ENCODE measurements at regions of chr11 and their contacts with region 1.

Region 1: GRCh38 chr11:34065505-34066203 is 14.1 kb downstream of the CAPRIN1 start:
- DNase-seq: no peak
- H3K4me3 ChIP-seq: no peak overlapping the region
- H3K27ac ChIP-seq: peak overlapping the region in 1 of 2 experiments; percentile 2; a peak in 1 of 4 replicates
- H3K4me1 ChIP-seq: peaks cover 0 to 72% of the 10 kb centered on the region in 2 experiments
- H3K27me3 ChIP-seq: no peaks in the 10 kb centered on the region
- CTCF ChIP-seq: no peak
- EP300 ChIP-seq: no peak
- RAD21 ChIP-seq: no peak

Region 2: GRCh38 chr11:33996498-33997454 is 68.9 kb before region 1 on chr11:
- CTCF ChIA-PET with region 1: interaction called, 10 read pairs
- POLR2A ChIA-PET with region 1: no interaction called
- DNase-seq: peak; percentile 80
- H3K4me3 ChIP-seq: no peak overlapping the region
- H3K27ac ChIP-seq: no peak overlapping the region
- H3K4me1 ChIP-seq: peaks cover 6 to 30% of the 10 kb centered on the region in 2 experiments; a peak in 2 of 4 replicates
- H3K27me3 ChIP-seq: peaks cover 14% of the 10 kb centered on the region; the same call in 1 of the 2 replicates
- CTCF ChIP-seq: peak; percentile 79
- EP300 ChIP-seq: no peak
- RAD21 ChIP-seq: peak; percentile 84

Measured in SK-N-SH (cell line).